ENCODE measurements at regions of chr17 and their contacts with region 1.

Region 1: DNA sequence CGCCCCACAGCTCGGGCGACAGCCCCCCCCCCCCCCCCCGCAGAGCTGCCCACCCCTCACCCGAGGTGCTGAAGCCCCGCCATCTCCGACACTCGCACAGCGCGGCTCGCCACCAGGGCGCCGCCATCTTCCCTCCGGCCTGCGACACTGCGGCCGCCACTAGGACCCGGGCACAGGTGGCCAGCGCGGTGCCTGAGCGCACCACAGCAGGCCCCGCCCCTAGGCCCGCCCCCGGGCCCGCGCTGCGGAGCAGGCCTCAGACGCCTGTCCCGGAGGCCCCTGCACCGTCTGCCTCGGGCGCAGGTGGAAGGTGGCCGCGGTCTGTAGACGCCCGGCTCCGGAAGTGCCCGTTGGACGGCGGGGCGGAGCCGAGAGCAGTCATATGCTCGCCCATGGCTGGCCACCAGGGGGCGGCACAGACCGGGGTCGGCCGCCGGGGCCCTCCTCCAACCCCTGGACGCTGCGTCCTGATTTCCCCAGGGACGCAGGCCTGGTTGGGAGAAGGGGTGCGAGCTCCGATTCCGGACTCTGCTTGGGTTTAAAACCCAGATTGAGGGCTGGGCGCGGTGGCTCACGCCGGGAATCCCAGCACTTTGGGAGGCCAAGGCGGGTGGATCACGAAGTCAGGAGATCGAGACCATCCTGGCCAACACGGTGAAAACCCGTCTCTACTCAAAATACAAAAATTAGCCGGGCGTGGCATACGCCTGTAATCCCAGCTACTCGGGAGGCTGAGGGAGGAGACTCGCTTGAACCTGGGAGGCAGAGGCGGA is at the start of gene MRPL38:
- DNase-seq: peak; percentile 99
- ATAC-seq: peak; percentile 98
- H3K4me3 ChIP-seq: peak within 1 kb of the TSS; percentile 78
- H3K27ac ChIP-seq: peak within 1 kb of the TSS; percentile 64
- H3K4me1 ChIP-seq: peaks cover 13% of the 10 kb centered on the region
- H3K27me3 ChIP-seq: no peaks in the 10 kb centered on the region
- CTCF ChIP-seq: peak; percentile 95
- total RNA-seq, gene MRPL38: 74.5 and 124 TPM in 2 replicates

Region 2: DNA sequence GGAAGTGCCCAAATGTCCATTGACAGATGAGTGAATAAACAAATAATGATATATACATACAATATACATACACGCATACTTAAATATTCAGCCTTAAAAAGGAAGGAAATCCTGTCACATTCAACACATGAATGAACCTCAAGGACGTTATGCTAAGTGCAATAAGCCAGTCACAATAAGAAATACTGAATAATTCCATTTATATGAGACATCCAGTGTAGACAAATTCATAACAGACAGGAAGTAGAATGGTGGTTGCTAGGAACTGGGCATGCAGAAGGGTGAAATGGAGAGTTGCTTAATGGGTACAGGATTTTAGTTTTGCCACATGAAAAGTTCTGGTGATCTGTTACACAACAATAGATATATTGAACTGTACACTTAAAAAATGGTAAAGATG is 192.5 kb before region 1 on chr17:
- CTCF ChIA-PET with region 1: no interaction called
- POLR2A ChIA-PET with region 1: no interaction called
- intact Hi-C with region 1: no loop called
- DNase-seq: peak; percentile 40
- ATAC-seq: peak; percentile 67
- H3K4me3 ChIP-seq: no peak overlapping the region
- H3K27ac ChIP-seq: no peak overlapping the region
- H3K4me1 ChIP-seq: peaks cover 11% of the 10 kb centered on the region
- H3K27me3 ChIP-seq: no peaks in the 10 kb centered on the region
- CTCF ChIP-seq: no peak

Region 3: DNA sequence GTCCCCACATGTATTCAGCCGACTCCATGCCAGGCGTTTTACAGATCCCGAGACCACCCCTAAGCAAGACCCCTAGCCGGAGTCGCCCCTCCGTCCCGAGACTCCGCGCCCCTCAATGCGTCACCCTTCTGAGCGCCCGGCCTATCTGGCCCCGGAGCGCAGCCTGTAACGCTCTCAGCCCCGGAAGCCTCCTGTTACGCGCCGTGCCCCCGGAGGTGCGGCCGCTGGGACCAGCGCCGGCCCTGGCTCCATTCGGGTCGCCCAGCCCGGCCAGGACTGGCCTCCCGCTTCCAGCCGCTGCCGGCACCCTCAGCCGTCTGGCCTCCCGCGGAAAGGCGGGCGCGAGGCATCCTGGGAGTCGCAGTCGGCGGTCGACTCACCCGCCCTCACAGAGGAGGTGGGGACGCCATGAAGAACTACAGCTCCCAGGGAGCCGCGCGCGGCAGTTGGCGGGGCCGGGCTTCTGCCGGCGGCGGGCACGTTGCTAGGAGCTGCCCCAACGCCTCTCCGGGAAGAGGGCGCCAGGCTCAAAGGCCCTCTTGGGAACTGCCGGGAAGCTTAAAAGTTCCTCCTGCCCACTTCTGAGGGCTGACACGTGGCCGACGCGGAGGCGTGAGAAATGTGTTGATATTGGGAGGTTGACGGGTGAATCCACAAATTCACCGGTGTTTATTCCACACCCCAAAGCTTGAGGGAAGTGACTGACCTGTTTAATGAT is 35.9 kb after region 1 on chr17 and contains the start of gene FBF1:
- CTCF ChIA-PET with region 1: interaction called, 4 read pairs
- POLR2A ChIA-PET with region 1: interaction called, 6 read pairs
- intact Hi-C with region 1: loop called (anchors 1 kb)
- DNase-seq: peak; percentile 98
- ATAC-seq: peak; percentile 99
- H3K4me3 ChIP-seq: peak within 1 kb of the TSS; percentile 88
- H3K27ac ChIP-seq: peak within 1 kb of the TSS; percentile 12; the same call in 1 of the 2 replicates
- H3K4me1 ChIP-seq: peaks cover 11% of the 10 kb centered on the region; the same call in 1 of the 2 replicates
- H3K27me3 ChIP-seq: no peaks in the 10 kb centered on the region
- CTCF ChIP-seq: peak; percentile 24; the same call in 1 of the 2 replicates
- total RNA-seq, gene FBF1: 35.3 and 39.2 TPM in 2 replicates

Region 4: DNA sequence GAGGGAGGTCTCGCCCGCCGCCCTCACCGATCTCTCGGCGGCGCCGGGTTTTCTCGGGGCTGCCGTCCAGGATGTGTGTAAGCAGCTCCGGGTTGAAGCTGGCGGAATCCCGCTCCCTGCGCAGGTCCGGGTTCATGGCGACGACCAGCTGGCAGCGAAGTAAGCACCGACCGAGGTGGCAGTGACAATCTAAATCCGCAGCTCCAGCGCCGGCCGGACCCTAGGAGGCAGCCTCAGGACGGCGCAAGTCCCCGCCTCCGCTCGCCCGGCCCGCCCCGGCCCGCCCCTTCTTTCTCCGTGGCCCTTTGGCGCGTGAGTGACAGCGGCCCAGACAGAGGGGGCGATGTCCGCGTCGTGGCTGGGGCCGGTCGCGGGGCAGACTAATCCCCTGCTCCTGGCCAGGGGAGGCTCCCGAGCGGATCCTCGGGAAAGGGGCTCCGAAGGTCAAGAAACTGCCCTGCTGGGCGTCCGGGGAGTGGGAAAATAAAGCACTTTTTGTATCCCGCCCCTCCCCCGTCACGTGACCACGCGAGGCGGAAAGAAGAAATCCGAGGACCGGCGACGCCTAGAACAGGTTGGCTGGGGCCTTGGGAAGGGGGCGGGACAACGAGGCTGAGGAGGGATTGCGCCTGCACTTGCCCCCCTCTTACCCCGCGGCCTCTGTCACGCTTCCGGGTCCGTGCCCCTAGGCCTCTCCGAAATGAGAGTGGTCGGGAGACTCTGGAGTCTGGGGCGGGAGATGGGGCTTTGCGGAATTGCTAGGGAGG is 74.2 kb after region 1 on chr17 and contains the starts of genes ACOX1 and TEN1:
- CTCF ChIA-PET with region 1: no interaction called
- POLR2A ChIA-PET with region 1: interaction called, 3 read pairs
- intact Hi-C with region 1: loop called (anchors 1 kb)
- DNase-seq: peak; percentile 98
- ATAC-seq: peak; percentile 93
- H3K4me3 ChIP-seq: peak within 1 kb of the TSS; percentile 94
- H3K27ac ChIP-seq: peak within 1 kb of the TSS; percentile 82
- H3K4me1 ChIP-seq: peaks cover 40% of the 10 kb centered on the region
- H3K27me3 ChIP-seq: no peaks in the 10 kb centered on the region
- CTCF ChIP-seq: peak; percentile 45; the same call in 1 of the 2 replicates
- total RNA-seq, gene ACOX1: 63.2 and 74.9 TPM in 2 replicates
- total RNA-seq, gene TEN1: 58.3 and 62.4 TPM in 2 replicates

Region 5: GRCh38 chr17:75996665-75997590 is 92.0 kb after region 1 on chr17:
- CTCF ChIA-PET with region 1: no interaction called
- POLR2A ChIA-PET with region 1: no interaction called
- intact Hi-C with region 1: loop called (anchors 2 kb)
- DNase-seq: peak; percentile 90
- ATAC-seq: peak; percentile 94
- H3K4me3 ChIP-seq: peak overlapping the region; percentile 61
- H3K27ac ChIP-seq: peak overlapping the region; percentile 97
- H3K4me1 ChIP-seq: peaks cover 32% of the 10 kb centered on the region
- H3K27me3 ChIP-seq: no peaks in the 10 kb centered on the region
- CTCF ChIP-seq: no peak

Region 6: DNA sequence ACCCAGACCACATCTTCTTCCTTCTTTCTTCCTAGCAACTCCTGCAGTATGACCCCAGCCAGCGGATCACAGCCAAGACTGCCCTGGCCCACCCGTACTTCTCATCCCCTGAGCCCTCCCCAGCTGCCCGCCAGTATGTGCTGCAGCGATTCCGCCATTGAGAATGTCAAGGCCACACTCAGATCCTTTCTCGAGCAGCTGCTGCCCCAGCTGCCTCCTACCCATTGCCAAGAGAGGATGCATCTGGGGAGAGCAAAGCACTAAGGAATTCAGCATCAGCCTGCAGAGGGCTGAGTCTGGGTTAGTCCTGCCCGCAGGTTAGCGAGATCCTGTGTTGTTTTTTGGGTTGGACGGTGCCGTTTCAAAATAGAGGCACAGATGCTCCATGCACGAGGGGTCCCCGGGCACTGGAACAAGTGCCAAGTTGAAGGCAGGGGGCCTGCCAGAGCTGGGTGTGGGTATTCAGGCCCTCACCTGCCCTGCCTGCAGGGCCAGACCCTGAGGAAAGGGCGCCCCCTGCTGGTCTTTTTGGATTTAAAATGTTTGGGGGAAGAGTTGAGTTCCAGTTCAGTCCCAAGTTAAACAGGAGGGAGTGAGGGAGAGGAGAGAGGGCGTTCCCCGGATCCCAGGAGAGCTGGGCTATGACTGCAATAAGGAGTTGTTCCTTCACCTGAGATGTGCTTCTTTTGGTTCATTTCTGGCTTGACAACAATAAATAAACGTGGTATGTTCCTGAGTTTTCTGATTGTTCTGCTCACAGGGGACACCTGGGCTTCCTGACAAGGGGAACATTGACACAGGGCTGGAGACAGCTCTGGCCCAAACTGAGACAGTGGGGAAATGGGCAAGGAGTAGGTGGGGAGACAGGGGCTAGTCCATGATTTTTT is 100.6 kb after region 1 on chr17:
- CTCF ChIA-PET with region 1: interaction called, 10 read pairs
- POLR2A ChIA-PET with region 1: no interaction called
- intact Hi-C with region 1: loop called (anchors 1 kb)
- DNase-seq: peak; percentile 93
- ATAC-seq: peak; percentile 76
- H3K4me3 ChIP-seq: no peak overlapping the region
- H3K27ac ChIP-seq: no peak overlapping the region
- H3K4me1 ChIP-seq: no peaks in the 10 kb centered on the region
- H3K27me3 ChIP-seq: no peaks in the 10 kb centered on the region
- CTCF ChIP-seq: peak; percentile 97

Region 7: DNA sequence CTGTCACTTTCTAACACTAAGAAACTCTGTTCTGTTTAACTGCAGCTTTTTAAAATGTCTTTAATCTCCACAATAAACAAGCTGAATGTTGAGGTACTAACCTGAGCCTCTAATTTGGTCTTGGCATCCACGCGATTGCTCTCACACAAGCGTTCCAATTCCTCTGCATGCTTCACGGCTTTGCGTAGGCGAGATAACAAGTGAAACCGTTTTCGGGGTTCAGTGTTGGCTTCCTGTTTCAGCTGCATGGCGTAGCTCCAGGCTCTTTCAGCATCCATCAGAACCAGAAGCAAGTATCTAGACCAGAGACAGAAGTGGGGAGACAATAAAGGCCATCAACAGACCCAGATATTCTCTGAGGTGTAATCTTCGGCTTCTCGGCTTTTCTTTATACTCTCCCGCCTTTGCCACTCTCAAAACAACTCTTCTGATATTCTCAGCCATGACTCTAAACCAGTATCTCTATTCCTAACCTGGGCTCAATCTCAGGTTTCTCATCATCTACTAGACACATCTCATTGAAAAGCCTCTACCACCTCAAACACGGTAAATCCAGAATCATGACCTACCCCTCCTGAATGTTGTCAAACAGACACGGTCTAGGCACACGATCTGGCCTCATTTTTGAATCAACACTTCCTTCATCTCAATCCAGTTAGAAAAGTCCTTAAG is 159.1 kb after region 1 on chr17:
- CTCF ChIA-PET with region 1: no interaction called
- POLR2A ChIA-PET with region 1: no interaction called
- intact Hi-C with region 1: no loop called
- DNase-seq: no peak
- ATAC-seq: no peak
- H3K4me3 ChIP-seq: no peak overlapping the region
- H3K27ac ChIP-seq: no peak overlapping the region
- H3K4me1 ChIP-seq: no peaks in the 10 kb centered on the region
- H3K27me3 ChIP-seq: no peaks in the 10 kb centered on the region
- CTCF ChIP-seq: no peak

Region 8: GRCh38 chr17:76278952-76279741 is 374.2 kb after region 1 on chr17:
- CTCF ChIA-PET with region 1: no interaction called
- POLR2A ChIA-PET with region 1: no interaction called
- intact Hi-C with region 1: loop called (anchors 10 kb)
- DNase-seq: peak; percentile 97
- ATAC-seq: peak; percentile 94
- H3K4me3 ChIP-seq: no peak overlapping the region
- H3K27ac ChIP-seq: no peak overlapping the region
- H3K4me1 ChIP-seq: peaks cover 13% of the 10 kb centered on the region
- H3K27me3 ChIP-seq: no peaks in the 10 kb centered on the region
- CTCF ChIP-seq: peak; percentile 99